Activated naive CD4-positive, alpha-beta T cell treated with anti-CD3 and anti-CD28 coated beads for 36 hours (primary cell): ENCODE measurements at regions of chr19 and their contacts with region 1.

Region 1: GRCh38 chr19:36850559-36851442 is at the start of gene ZNF345:
- DNase-seq: peak; percentile 91
- H3K4me3 Mint-ChIP-seq: no peak within 1 kb of the TSS
- H3K27ac Mint-ChIP-seq: no peak within 1 kb of the TSS
- H3K4me1 Mint-ChIP-seq: peaks cover 2% of the 10 kb centered on the region
- H3K27me3 Mint-ChIP-seq: no peaks in the 10 kb centered on the region
- total RNA-seq, gene ZNF345: 3.0 to 3.6 TPM

Region 2: DNA sequence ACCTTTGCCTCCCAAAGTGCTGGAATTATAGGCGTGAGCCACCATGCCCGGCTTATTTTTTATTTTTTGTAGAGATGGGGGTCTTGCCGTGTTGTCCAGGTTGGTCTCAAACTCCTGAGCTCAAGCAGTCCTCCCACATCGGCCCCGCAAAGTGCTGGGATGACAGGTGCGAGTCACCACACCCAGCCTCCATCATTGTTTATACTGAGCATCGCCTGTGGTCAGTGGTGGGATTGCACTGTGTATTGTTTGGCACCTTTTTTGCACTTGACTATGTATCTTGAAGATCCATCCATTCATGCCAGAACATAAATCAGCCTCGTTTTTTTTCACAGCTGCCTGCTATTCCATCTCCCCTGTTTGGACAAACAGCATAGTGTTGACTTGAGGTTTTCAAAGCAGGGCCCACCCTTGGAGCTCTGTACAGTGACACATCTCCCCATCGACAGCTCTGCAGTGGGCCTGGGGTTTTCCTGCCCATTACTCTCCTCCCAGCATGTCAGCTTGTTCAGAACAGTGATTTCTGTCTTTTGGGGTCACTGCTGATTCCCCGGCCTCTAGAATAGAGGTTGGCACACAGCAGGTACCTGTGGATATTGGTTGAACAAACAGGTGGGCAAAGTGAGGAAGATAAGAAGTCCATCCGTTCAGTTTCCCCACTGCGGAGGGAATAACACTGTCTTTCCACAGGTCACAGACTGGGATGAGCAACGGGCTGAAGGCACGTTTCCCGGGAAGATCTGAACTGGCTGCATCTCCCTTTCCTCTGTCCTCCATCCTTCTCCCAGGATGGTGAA is 1192.7 kb before region 1 on chr19:
- CTCF ChIA-PET with region 1: no interaction called
- intact Hi-C with region 1: no loop called
- DNase-seq: no peak
- H3K4me3 Mint-ChIP-seq: no peak overlapping the region
- H3K27ac Mint-ChIP-seq: no peak overlapping the region
- H3K4me1 Mint-ChIP-seq: peaks cover 6% of the 10 kb centered on the region
- H3K27me3 Mint-ChIP-seq: no peaks in the 10 kb centered on the region

Region 3: DNA sequence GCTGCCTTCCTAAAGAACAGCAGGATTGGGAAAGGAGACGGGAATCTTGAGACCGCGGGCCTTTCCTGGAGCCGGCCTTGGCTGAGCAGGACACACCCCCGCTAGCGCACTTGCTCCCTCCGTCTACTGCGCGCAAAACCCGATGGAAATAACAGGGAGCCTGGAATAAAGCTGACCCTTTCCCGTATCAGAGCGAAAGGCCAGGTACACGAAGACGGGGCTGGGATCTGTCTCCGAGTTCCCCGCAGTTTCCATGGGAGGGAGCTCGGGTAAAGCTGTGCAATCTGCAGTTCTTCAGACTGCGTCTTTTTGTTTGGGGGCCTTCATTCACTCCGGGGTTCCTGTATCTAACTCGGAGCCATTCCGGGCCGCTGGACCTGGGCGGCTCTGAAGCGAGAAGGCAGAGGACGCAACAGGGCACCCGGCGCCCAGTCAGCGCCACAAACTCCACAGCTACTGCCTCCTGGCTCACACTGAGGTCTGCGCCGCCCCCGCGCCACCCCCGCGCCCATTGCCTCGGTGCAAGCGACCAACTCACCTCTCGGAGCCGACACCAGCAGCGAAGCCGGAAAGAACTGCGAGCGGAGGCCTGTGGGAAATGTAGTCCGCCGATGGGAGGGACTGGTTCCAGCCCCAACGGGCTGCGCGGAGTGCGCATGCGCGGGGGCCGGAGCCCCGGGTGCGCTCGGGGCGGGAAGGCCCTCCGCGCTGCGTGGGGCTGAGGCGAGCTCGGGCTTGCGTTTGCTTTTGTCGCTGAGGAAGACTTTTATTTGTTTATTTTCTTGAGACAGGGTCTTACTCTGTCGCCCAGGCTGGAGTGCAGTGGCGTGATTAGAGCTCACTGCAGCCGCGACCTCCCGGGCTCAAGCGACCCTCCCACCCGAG is 471.9 kb before region 1 on chr19 and contains the start of gene ZFP14:
- CTCF ChIA-PET with region 1: no interaction called
- intact Hi-C with region 1: loop called (anchors 2 kb)
- DNase-seq: peak; percentile 96
- H3K4me3 Mint-ChIP-seq: peak within 1 kb of the TSS; percentile 90
- H3K27ac Mint-ChIP-seq: peak within 1 kb of the TSS; percentile 84
- H3K4me1 Mint-ChIP-seq: peaks cover 10% of the 10 kb centered on the region
- H3K27me3 Mint-ChIP-seq: no peaks in the 10 kb centered on the region
- total RNA-seq, gene ZFP14: 2.2 to 3.1 TPM

Region 4: DNA sequence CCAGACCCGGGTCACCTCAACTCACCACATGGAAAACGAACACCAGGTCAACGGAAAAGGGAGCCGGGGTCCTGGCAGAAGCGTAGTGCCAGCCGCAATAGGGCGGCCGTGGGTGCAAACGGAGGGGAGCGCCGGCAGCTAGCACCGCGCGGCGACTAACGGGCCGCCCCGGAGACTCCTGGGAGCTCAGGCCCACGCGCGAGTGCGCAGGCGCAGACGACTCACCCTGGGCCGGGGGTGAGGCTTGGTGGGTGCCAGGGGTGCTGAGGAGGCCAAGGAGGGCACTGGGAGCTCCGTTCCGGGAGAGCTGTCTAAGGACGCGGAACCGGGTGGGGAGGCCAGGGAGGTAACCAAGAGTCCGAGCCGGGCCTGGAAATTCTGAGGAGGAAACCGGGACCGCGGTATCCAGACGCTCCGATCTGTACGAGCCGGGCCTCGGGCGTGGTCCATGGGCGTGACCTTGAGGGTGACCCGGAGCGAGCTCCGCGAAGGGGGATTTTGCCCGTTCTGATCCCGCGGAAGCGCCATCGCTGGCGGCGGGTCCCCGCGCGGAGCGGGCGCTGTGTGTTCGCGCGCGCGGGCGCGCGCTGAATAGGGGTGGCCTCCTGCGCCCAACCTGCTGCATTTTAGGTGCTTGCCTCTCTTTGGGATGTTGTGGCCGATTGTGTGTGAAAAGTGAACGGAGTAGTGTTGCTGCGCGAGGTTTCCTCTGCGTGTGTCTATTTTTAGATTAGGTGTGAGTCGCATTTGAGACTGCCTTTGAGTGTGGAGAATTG is 245.5 kb before region 1 on chr19 and contains the start of gene ZNF382:
- CTCF ChIA-PET with region 1: no interaction called
- intact Hi-C with region 1: loop called (anchors 2 kb)
- DNase-seq: peak; percentile 87
- H3K4me3 Mint-ChIP-seq: peak within 1 kb of the TSS; percentile 81
- H3K27ac Mint-ChIP-seq: peak within 1 kb of the TSS; percentile 93
- H3K4me1 Mint-ChIP-seq: peaks cover 19% of the 10 kb centered on the region
- H3K27me3 Mint-ChIP-seq: no peaks in the 10 kb centered on the region
- total RNA-seq, gene ZNF382: 7.5 to 7.6 TPM

Region 5: DNA sequence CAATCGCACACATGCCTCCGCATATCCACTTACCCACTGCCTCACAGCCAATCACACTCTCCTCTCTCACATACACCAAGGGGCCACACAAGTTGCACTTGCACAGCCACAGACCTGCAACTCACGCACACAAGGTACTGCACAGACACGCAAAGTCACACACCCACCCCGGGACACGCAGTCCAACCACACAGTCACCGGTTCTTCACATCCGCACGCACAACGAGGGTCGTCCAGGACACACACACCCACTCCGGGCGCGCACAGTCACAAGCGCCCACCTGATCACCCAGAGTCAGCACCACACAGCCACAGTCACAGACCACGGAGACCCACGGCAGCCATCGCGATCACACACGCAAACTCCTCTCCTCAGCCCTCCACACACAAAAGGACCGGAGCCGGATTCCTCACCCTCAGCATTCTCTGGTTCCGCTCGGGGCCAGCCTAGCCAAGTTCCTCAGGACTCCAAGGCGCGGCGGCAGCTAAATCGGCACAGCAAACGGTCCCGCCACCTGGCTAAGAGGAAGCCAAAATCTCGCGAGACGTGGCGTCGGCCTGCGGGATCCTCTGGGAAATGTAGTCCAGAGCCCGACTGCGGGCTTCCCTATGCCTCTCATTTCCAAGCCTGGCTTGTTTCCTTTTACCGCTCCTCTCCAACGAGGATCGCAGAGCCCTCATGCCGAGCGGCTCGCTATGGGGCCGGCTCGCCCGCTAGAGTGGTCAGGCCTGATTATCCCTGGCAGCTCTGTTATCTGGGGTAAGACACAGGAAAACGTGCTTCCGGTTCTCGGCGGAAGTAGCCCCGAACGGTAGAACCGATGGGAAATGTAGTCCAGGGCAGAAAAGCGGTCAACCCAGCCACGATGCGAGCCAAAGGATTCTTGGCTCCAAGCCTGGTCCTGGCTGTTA is 78.2 kb before region 1 on chr19 and contains the start of gene ZNF850:
- CTCF ChIA-PET with region 1: no interaction called
- intact Hi-C with region 1: loop called (anchors 1 kb)
- DNase-seq: peak; percentile 97
- H3K4me3 Mint-ChIP-seq: peak within 1 kb of the TSS; percentile 98
- H3K27ac Mint-ChIP-seq: peak within 1 kb of the TSS; percentile 90
- H3K4me1 Mint-ChIP-seq: peaks cover 21% of the 10 kb centered on the region
- H3K27me3 Mint-ChIP-seq: peaks cover 2% of the 10 kb centered on the region
- total RNA-seq, gene ZNF850: 11.2 to 11.3 TPM

Region 6: DNA sequence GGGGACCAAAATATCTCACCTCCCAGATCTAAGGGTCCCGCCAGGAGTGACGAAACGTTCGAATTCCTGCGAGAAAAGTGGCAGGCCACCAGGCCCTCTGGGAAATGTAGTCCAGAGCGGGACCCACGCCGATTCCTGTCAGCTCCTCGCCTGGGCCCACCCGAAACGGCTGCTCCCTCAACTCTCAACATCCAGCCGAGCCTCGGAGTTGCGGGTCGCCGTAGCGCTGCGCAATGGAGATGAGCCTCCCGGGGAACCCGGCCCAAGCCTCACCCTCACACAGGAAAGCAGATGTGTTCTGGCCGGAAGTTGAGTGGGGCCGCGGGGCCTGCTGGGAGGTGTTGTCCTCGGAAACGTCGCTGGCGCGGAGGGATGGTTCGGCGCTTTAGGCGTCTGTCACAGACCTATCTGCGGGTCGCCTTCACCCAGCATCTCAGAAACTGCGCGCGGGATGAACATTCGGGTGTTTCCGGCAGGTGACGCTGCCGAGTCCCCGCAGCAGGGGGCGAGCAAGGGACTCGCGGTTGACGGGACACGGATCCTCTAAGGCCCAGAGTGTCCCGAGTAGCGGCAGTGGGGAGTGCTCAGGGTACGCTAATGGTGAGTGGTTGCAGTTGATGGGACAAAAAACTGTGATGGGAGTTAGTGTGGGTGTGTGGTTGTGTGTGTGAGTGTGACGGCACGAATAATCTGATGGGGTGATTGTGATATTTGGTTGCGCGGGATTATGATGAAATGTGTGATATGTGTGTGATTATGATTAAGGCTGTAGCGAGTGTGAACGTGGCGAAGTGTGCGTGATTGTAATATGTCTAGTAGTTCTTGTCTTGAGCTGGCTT is 65.4 kb after region 1 on chr19 and contains the starts of genes ZNF568 and ZNF829:
- CTCF ChIA-PET with region 1: no interaction called
- intact Hi-C with region 1: loop called (anchors 1 kb)
- DNase-seq: peak; percentile 96
- H3K4me3 Mint-ChIP-seq: peak within 1 kb of the TSS; percentile 87
- H3K27ac Mint-ChIP-seq: peak within 1 kb of the TSS; percentile 91
- H3K4me1 Mint-ChIP-seq: peaks cover 17% of the 10 kb centered on the region
- H3K27me3 Mint-ChIP-seq: no peaks in the 10 kb centered on the region
- total RNA-seq, gene ZNF568: 5.3 to 6.3 TPM
- total RNA-seq, gene ZNF829: 3.5 to 3.7 TPM

Region 7: GRCh38 chr19:36986601-36987000 is 135.8 kb after region 1 on chr19:
- CTCF ChIA-PET with region 1: no interaction called
- intact Hi-C with region 1: no loop called
- DNase-seq: no peak
- H3K4me3 Mint-ChIP-seq: no peak overlapping the region
- H3K27ac Mint-ChIP-seq: no peak overlapping the region
- H3K4me1 Mint-ChIP-seq: no peaks in the 10 kb centered on the region
- H3K27me3 Mint-ChIP-seq: no peaks in the 10 kb centered on the region

Region 8: DNA sequence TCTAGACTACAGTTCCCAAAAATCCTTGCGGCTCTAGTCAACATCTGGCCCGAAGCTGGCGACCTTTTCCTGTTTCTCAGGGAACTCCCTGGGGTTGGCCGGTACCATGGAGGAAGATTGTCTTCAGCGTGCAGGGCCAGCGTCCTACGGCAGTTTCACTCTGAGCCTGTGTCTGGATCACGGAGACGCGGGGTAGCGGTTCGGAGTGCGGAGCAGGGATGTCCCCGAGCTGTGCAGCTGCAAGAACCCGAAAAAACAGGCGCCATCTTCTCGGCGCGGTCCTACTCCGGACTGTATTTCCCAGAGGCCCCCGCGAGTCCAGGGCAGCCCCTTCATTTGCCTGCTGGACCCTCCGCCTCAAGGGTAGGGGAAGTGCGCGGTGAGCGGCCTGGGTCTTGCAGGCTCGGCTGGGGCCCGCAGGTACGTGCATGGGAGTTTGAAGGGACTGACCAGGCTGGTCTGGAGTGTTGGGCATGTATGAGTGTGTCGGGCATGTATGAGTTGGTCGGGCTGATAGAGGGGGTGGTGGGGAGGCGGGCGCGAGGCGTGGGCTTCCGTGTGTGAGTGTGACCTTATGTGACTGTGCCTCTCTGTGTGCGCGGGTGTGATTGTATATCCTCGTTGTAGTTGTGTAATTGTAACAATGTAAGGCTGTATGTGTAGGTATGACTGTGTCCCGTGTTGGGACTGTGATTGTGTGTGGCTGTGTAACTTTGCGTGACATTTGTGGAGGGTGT is 367.2 kb after region 1 on chr19 and contains the start of gene ZNF383:
- CTCF ChIA-PET with region 1: no interaction called
- intact Hi-C with region 1: loop called (anchors 5 kb)
- DNase-seq: peak; percentile 87
- H3K4me3 Mint-ChIP-seq: peak within 1 kb of the TSS; percentile 88
- H3K27ac Mint-ChIP-seq: peak within 1 kb of the TSS; percentile 92
- H3K4me1 Mint-ChIP-seq: peaks cover 16% of the 10 kb centered on the region
- H3K27me3 Mint-ChIP-seq: no peaks in the 10 kb centered on the region
- total RNA-seq, gene ZNF383: 8.4 to 9.1 TPM

Region 9: GRCh38 chr19:37779127-37780005 is 928.6 kb after region 1 on chr19 and contains the start of gene ZNF573:
- CTCF ChIA-PET with region 1: no interaction called
- intact Hi-C with region 1: loop called (anchors 1 kb)
- DNase-seq: peak; percentile 91
- H3K4me3 Mint-ChIP-seq: peak within 1 kb of the TSS; percentile 96
- H3K27ac Mint-ChIP-seq: peak within 1 kb of the TSS; percentile 99
- H3K4me1 Mint-ChIP-seq: peaks cover 25% of the 10 kb centered on the region
- H3K27me3 Mint-ChIP-seq: no peaks in the 10 kb centered on the region
- total RNA-seq, gene ZNF573: 6.1 to 7.3 TPM